Thyroid gland (tissue), 4 donors: ENCODE measurements at regions of chr5 and their contacts with region 1.

Region 1: GRCh38 chr5:36728697-36729543 is 122.5 kb downstream of the SLC1A3 start:
- DNase-seq: peak in 1 of 2 donors; percentile 11
- H3K4me3 ChIP-seq: no peak overlapping the region
- H3K27ac ChIP-seq: no peak overlapping the region
- H3K4me1 ChIP-seq: no peaks in the 10 kb centered on the region
- H3K27me3 ChIP-seq: no peaks in the 10 kb centered on the region
- CTCF ChIP-seq: peak; percentile 54 to 72 (median 64)
- POLR2A ChIP-seq: no peak

Region 2: GRCh38 chr5:36820900-36821299 is 92.0 kb after region 1 on chr5:
- intact Hi-C with region 1: no loop called
- DNase-seq: peak; percentile 55 to 72
- H3K4me3 ChIP-seq: no peak overlapping the region
- H3K27ac ChIP-seq: no peak overlapping the region
- H3K4me1 ChIP-seq: no peaks in the 10 kb centered on the region
- H3K27me3 ChIP-seq: no peaks in the 10 kb centered on the region
- CTCF ChIP-seq: no peak
- POLR2A ChIP-seq: no peak

Region 3: DNA sequence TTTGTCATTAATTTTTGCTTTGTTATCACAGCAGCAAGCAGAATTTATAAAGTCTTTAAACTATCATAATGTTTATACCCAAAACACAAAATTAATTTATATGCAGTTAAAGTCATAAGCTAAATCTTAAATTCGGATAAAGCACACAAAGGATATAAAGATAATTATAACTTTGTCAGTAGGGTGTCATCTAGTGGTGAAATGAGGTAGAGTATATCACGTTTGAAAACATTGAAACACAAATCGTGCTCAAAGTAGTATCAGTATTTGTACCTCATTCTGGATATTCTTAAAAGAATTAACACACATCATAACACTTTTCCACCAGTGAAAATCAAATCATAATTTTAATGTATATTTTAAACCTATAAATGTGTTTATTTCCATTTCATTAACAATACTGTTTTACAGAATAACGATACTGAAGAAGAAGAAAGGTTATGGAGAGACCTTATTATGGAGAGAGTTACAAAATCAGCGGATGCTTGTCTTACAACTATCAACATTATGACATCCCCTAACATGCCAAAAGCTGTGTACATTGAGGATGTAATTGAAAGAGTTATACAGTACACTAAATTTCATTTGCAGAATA is 277.1 kb after region 1 on chr5:
- intact Hi-C with region 1: loop called (anchors 5 kb)
- DNase-seq: no peak
- H3K4me3 ChIP-seq: no peak overlapping the region
- H3K27ac ChIP-seq: no peak overlapping the region
- H3K4me1 ChIP-seq: no peaks in the 10 kb centered on the region
- H3K27me3 ChIP-seq: no peaks in the 10 kb centered on the region
- CTCF ChIP-seq: peak in 5 of 6 experiments; percentile 37 to 83 (median 70)
- POLR2A ChIP-seq: no peak